Natural killer cell (primary cell): ENCODE measurements at regions of chr20 and their contacts with region 1.

Region 1: DNA sequence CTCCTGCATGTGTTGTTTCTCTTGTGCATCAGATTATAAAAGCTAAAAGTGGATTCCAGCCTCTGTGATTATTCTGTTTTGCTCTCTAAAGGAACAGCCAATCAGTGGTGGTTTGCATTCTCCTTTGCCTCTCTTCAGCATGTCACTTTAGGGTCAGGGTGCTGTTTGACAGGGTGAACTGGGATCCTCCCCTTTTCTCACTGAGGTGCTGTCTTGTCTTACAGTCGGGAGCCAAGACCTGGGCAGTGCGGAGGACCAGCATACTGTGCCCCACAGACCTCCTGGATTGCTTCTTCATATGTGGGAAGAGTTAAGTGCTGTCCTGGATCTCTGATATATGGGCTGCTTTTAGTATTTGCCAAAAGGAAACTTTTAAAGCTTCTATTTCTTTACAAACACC is 15.2 kb upstream of the CST2 start:
- DNase-seq: no peak
- ATAC-seq: no peak
- H3K4me3 ChIP-seq: no peak overlapping the region
- H3K4me3 Mint-ChIP-seq: no peak overlapping the region
- H3K27ac ChIP-seq: no peak overlapping the region
- H3K27ac Mint-ChIP-seq: no peak overlapping the region
- H3K4me1 ChIP-seq: no peaks in the 10 kb centered on the region
- H3K4me1 Mint-ChIP-seq: no peaks in the 10 kb centered on the region
- H3K27me3 ChIP-seq: no peaks in the 10 kb centered on the region
- H3K27me3 Mint-ChIP-seq: peaks cover 13 to 41% of the 10 kb centered on the region in 2 donors
- CTCF ChIP-seq: no peak

Region 2: DNA sequence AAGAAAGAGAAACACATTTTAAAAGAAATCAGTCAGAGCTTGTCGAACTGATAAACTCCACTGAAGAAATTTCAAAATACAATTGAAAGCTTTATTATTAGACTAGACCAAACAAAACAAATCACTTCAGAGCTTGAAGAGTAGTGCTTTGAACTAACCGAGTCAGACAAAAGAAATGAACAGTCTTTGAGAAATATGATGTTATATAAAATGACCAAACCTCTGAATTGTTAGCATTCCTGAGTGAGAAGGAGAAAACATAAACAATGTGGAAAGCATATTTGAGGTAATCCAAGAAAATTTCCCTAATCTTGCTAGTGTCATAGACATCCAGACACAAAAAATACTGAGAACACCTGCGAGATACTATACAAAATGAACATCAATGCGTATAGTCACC is 139.7 kb before region 1 on chr20:
- intact Hi-C with region 1: loop called (anchors 2 kb)
- DNase-seq: no peak
- ATAC-seq: no peak
- H3K4me3 ChIP-seq: no peak overlapping the region
- H3K4me3 Mint-ChIP-seq: no peak overlapping the region
- H3K27ac ChIP-seq: no peak overlapping the region
- H3K27ac Mint-ChIP-seq: no peak overlapping the region
- H3K4me1 ChIP-seq: no peaks in the 10 kb centered on the region
- H3K4me1 Mint-ChIP-seq: no peaks in the 10 kb centered on the region
- H3K27me3 ChIP-seq: no peaks in the 10 kb centered on the region
- H3K27me3 Mint-ChIP-seq: peaks cover 5 to 30% of the 10 kb centered on the region in 2 donors
- CTCF ChIP-seq: no peak

Region 3: GRCh38 chr20:23765578-23765977 is 76.1 kb before region 1 on chr20:
- intact Hi-C with region 1: no loop called
- DNase-seq: no peak
- ATAC-seq: no peak
- H3K4me3 ChIP-seq: no peak overlapping the region
- H3K4me3 Mint-ChIP-seq: no peak overlapping the region
- H3K27ac ChIP-seq: no peak overlapping the region
- H3K27ac Mint-ChIP-seq: no peak overlapping the region
- H3K4me1 ChIP-seq: no peaks in the 10 kb centered on the region
- H3K4me1 Mint-ChIP-seq: no peaks in the 10 kb centered on the region
- H3K27me3 ChIP-seq: no peaks in the 10 kb centered on the region
- H3K27me3 Mint-ChIP-seq: peaks cover 13 to 35% of the 10 kb centered on the region in 2 donors
- CTCF ChIP-seq: no peak

Region 4: DNA sequence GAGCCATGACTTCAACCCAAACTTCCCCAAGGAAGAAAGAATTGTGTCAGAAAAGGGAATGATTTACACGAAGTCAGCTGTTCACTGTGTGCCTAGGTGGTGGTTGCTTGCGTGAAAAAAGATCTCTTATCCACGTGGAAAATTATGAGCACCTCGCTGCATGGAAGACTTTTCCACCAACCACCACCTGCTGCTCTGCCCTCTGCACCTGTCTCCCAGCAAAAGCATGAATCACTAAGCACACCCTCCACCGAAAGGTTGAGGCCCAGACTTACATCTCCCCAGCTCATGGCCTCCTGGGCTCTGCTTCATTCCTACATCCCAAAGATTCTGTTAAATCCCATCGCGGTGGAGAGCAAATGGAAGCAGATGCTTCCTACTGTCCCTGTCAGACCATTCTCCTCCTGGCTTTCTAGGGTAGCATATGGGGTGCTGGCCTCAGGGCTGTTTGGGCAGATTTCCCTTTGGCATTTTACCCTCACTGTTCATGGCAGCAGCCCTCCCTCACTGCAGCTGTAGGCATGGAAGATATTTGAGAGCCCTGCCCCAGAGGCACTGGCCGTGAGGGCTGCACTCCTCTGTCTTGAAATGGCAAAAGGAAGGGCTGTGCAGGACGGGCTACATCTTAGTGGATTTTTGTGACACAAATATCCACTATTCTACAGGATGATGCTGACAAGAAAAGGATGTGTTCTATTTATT is 75.5 kb after region 1 on chr20:
- intact Hi-C with region 1: no loop called
- DNase-seq: no peak
- ATAC-seq: no peak
- H3K4me3 ChIP-seq: no peak overlapping the region
- H3K4me3 Mint-ChIP-seq: no peak overlapping the region
- H3K27ac ChIP-seq: no peak overlapping the region
- H3K27ac Mint-ChIP-seq: no peak overlapping the region
- H3K4me1 ChIP-seq: peaks cover 34% of the 10 kb centered on the region
- H3K4me1 Mint-ChIP-seq: peaks cover 20 to 26% of the 10 kb centered on the region in 2 donors
- H3K27me3 ChIP-seq: no peaks in the 10 kb centered on the region
- H3K27me3 Mint-ChIP-seq: peaks cover 28 to 52% of the 10 kb centered on the region in 2 donors
- CTCF ChIP-seq: no peak